MCF 10A (cell line): ENCODE measurements at regions of chr15 and their contacts with region 1.

Region 1: GRCh38 chr15:67998599-67999122 is 55.5 kb upstream of the PIAS1 start:
- DNase-seq: peak; percentile 80
- H3K4me3 Mint-ChIP-seq: peak overlapping the region; percentile 53
- H3K27ac Mint-ChIP-seq: peak overlapping the region; percentile 50
- H3K4me1 Mint-ChIP-seq: peaks cover 30% of the 10 kb centered on the region
- H3K27me3 Mint-ChIP-seq: no peaks in the 10 kb centered on the region
- CTCF ChIP-seq: no peak

Region 2: GRCh38 chr15:67863442-67863987 is 135.1 kb before region 1 on chr15:
- CTCF ChIA-PET with region 1: interaction called, 4 read pairs
- POLR2A ChIA-PET with region 1: interaction called, 9 read pairs
- intact Hi-C with region 1: loop called (anchors 5 kb)
- DNase-seq: peak; percentile 78
- H3K4me3 Mint-ChIP-seq: peak overlapping the region; percentile 66
- H3K27ac Mint-ChIP-seq: peak overlapping the region; percentile 37
- H3K4me1 Mint-ChIP-seq: peaks cover 14% of the 10 kb centered on the region
- H3K27me3 Mint-ChIP-seq: no peaks in the 10 kb centered on the region
- CTCF ChIP-seq: peak; percentile 95

Region 3: DNA sequence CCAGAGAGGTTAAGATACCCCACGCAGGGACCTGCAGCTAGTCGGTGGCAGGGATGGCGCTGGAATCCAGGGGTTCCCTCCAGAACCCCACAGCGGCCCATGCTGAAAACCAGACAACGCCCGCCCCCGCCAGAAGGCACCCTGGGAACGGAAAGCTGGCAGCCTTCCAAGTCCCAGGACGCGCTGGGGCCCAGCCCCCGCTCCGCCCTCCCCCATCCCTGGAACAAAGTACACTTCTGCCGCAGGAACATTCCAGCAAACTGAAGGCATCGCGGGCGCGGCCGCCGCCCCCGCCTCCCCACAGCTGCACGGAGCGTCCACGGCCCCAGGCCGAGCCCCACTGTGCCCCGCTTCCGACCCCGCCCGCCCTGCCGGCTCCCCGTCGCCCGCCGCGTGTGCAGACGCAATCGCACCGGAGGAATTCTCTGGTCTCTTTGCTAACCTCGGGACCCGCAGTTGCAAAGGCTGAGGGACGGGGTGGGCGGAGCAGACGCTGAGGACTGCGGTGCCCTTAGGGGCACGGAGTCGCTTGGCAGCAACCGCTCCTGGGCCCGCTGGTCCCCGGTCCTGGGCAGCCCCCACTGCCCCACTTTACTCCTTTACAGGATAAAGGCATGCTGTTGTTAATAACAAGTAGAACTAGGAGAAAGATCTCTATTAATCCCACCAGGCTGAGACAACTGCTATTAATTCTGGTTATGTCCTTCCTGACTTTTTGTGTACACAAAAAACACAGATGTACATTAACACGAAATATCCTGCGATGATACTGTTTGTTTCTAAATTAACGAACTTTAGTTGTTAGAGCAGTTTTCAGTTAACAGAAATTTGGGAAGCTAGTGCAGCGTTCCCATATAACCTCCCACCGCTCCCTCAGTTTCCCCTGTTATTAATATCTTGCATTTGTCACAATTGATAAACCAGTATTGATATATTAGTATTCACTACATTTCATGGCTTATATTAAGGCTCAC is 113.9 kb before region 1 on chr15:
- CTCF ChIA-PET with region 1: interaction called, 3 read pairs
- POLR2A ChIA-PET with region 1: interaction called, 12 read pairs
- intact Hi-C with region 1: no loop called
- DNase-seq: peak; percentile 93
- H3K4me3 Mint-ChIP-seq: peak overlapping the region; percentile 50
- H3K27ac Mint-ChIP-seq: peak overlapping the region; percentile 73
- H3K4me1 Mint-ChIP-seq: peaks cover 51% of the 10 kb centered on the region
- H3K27me3 Mint-ChIP-seq: no peaks in the 10 kb centered on the region
- CTCF ChIP-seq: no peak

Region 4: GRCh38 chr15:67955252-67955651 is 43.4 kb before region 1 on chr15:
- CTCF ChIA-PET with region 1: interaction called, 4 read pairs
- POLR2A ChIA-PET with region 1: interaction called, 30 read pairs
- intact Hi-C with region 1: no loop called
- DNase-seq: no peak
- H3K4me3 Mint-ChIP-seq: no peak overlapping the region
- H3K27ac Mint-ChIP-seq: peak overlapping the region; percentile 92
- H3K4me1 Mint-ChIP-seq: peaks cover 54% of the 10 kb centered on the region
- H3K27me3 Mint-ChIP-seq: no peaks in the 10 kb centered on the region
- CTCF ChIP-seq: no peak

Region 5: GRCh38 chr15:68097029-68097428 is 98.4 kb after region 1 on chr15:
- CTCF ChIA-PET with region 1: no interaction called
- POLR2A ChIA-PET with region 1: no interaction called
- intact Hi-C with region 1: no loop called
- DNase-seq: no peak
- H3K4me3 Mint-ChIP-seq: no peak overlapping the region
- H3K27ac Mint-ChIP-seq: no peak overlapping the region
- H3K4me1 Mint-ChIP-seq: peaks cover 6% of the 10 kb centered on the region
- H3K27me3 Mint-ChIP-seq: no peaks in the 10 kb centered on the region
- CTCF ChIP-seq: no peak

Region 6: DNA sequence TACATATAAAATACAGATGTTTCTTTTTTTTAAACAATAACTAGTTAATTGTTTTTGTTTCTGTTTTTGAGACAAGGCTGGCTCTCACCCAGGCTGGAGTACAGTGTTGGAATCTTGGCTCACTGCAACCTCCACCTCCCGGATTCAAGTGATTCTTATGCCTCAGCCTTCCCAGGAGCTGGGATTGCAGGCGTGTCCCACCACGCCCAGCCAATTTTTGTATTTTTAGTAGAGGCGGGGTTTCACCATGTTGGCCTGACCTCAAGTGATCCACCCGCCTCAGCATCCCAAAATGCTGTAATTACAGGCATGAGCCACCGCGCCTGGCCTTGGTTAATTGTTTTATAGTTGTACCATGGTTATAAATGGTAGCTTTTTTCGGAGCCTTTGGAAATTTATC is 127.7 kb after region 1 on chr15:
- CTCF ChIA-PET with region 1: no interaction called
- POLR2A ChIA-PET with region 1: interaction called, 11 read pairs
- intact Hi-C with region 1: no loop called
- DNase-seq: peak; percentile 79
- H3K4me3 Mint-ChIP-seq: no peak overlapping the region
- H3K27ac Mint-ChIP-seq: no peak overlapping the region
- H3K4me1 Mint-ChIP-seq: peaks cover 26% of the 10 kb centered on the region
- H3K27me3 Mint-ChIP-seq: no peaks in the 10 kb centered on the region
- CTCF ChIP-seq: no peak